HepG2 (cell line): ENCODE measurements at regions of chr17 and their contacts with region 1.

Region 1: GRCh38 chr17:57243171-57243948 is 13.0 kb upstream of the MSI2 start:
- DNase-seq: peak; percentile 70
- ATAC-seq: peak; percentile 94
- H3K4me3 ChIP-seq: no peak overlapping the region
- H3K27ac ChIP-seq: no peak overlapping the region
- H3K4me1 ChIP-seq: peaks cover 10% of the 10 kb centered on the region
- H3K27me3 ChIP-seq: no peaks in the 10 kb centered on the region
- CTCF ChIP-seq: peak; percentile 99
- EP300 ChIP-seq: no peak
- POLR2A ChIP-seq: no peak
- RAD21 ChIP-seq: peak; percentile 98

Region 2: DNA sequence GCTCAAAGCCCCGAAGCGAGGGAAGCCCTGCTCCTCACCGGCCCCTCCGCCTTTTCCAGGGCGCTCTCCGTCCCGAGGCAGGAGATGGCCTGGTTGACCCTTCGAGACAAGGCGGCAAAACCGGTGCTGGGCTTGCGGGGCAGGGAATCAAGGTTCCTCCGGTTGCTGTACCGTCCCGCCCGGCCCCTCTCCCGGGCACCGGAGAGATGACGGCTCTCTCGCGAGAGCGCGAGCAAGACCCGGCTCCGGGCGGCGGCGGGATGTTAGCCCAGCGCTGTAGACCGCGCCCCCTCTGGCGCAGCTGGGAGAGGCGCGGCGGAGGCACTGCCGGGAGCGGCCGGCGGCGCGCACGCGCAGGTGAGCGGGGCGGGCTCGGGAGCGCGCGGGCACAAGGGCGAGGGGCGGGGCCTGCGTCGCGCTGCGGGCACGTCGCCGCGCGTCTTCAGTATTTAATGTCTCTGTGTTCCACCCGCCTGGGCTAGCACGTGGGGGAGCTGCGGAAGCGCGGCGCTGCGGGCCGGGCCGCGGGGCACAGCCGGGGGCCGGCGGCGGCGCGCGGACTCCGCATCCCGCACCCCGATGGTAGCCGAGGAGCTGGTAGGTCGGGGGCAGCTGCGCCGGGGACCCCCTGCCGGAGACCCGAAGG is 158.4 kb before region 1 on chr17 and contains the start of gene AKAP1:
- CTCF ChIA-PET with region 1: no interaction called
- POLR2A ChIA-PET with region 1: no interaction called
- in situ Hi-C with region 1: no loop called
- intact Hi-C with region 1: no loop called
- DNase-seq: peak; percentile 92
- ATAC-seq: peak; percentile 72
- H3K4me3 ChIP-seq: peak within 1 kb of the TSS; percentile 84 to 100 (median 94)
- H3K27ac ChIP-seq: peak within 1 kb of the TSS; percentile 92
- H3K4me1 ChIP-seq: peaks cover 62% of the 10 kb centered on the region
- H3K27me3 ChIP-seq: no peaks in the 10 kb centered on the region; a peak in 1 of 5 replicates
- CTCF ChIP-seq: peak; percentile 80
- EP300 ChIP-seq: peak in 1 of 2 experiments; percentile 35; a peak in 2 of 4 replicates
- POLR2A ChIP-seq: peak; percentile 87 to 95
- RAD21 ChIP-seq: peak; percentile 50; the same call in 1 of the 2 replicates
- total RNA-seq, gene AKAP1: 46.4 and 101 TPM in 2 replicates

Region 3: DNA sequence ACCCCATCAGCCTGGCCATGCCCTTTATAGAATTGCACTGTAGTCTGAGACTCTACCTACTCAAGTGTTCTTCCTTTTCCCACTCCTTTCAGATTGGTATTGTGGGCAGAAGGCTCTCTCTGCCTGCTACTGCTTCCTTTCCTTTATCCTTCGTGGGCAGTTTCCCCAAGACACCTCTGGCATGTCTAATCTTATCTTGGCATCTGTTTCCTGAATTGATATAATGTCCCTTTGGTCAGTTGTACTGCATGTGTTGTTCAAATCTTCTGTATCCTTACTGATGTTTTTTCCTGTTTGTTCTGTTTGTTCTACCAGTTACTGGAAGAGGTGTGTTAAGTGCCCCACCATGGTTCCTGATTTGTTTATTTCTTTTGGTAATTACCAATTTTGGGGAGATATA is 16.6 kb before region 1 on chr17:
- CTCF ChIA-PET with region 1: no interaction called
- POLR2A ChIA-PET with region 1: no interaction called
- in situ Hi-C with region 1: no loop called
- intact Hi-C with region 1: no loop called
- DNase-seq: no peak
- ATAC-seq: no peak
- H3K4me3 ChIP-seq: no peak overlapping the region
- H3K27ac ChIP-seq: no peak overlapping the region
- H3K4me1 ChIP-seq: no peaks in the 10 kb centered on the region
- H3K27me3 ChIP-seq: peaks cover 0 to 6% of the 10 kb centered on the region in 2 experiments; a peak in 3 of 5 replicates
- CTCF ChIP-seq: no peak
- EP300 ChIP-seq: no peak
- POLR2A ChIP-seq: no peak
- RAD21 ChIP-seq: no peak

Region 4: DNA sequence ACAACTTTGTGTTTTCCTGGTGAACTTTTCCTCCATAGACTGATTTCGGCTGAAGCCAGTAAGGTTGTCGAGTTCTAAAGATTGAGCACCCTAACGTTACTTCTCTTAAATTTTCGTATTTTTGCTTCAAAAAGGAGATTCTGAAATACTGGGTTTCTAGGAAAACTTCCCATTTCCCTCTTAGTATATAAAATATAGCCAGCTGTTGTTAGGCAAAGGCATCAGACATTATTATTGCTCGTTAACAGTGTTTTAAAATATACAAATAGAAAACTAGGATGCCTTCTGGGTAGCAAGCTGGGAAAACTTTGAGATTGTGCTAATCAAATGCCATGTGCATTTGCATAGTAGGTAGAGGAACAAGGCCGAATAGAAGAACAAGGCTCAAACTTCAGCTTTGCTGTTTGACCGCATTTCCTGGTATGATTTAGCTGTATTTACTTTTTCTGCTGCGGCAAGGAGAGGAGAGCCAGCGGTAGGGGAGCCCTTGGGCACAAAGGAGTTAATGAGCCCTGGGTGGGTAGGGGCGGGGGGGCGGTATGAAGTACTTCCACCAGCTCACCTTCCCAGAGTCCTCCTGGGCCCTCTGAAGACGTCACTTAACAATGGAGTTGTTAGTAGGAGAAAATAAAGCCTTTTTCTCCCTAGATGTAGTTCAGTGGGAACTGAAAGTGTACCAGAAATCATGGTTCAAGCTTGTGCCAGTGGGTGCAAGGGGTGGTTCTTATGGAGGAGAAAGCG is 164.9 kb after region 1 on chr17:
- CTCF ChIA-PET with region 1: interaction called, 10 read pairs
- POLR2A ChIA-PET with region 1: no interaction called
- in situ Hi-C with region 1: no loop called
- intact Hi-C with region 1: loop called (anchors 5 kb)
- DNase-seq: peak; percentile 86
- ATAC-seq: peak; percentile 27
- H3K4me3 ChIP-seq: peak overlapping the region; percentile 26 to 57 (median 51)
- H3K27ac ChIP-seq: peak overlapping the region; percentile 96
- H3K4me1 ChIP-seq: peaks cover 100% of the 10 kb centered on the region
- H3K27me3 ChIP-seq: no peaks in the 10 kb centered on the region
- CTCF ChIP-seq: no peak
- EP300 ChIP-seq: peak in 1 of 2 experiments; percentile 41; a peak in 1 of 4 replicates
- POLR2A ChIP-seq: peak in 1 of 2 experiments; percentile 39; a peak in 1 of 4 replicates
- RAD21 ChIP-seq: no peak

Region 5: GRCh38 chr17:57463103-57463851 is 219.9 kb after region 1 on chr17:
- CTCF ChIA-PET with region 1: interaction called, 11 read pairs
- POLR2A ChIA-PET with region 1: no interaction called
- in situ Hi-C with region 1: no loop called
- intact Hi-C with region 1: no loop called
- DNase-seq: peak; percentile 30
- ATAC-seq: no peak
- H3K4me3 ChIP-seq: no peak overlapping the region
- H3K27ac ChIP-seq: no peak overlapping the region
- H3K4me1 ChIP-seq: peaks cover 74% of the 10 kb centered on the region
- H3K27me3 ChIP-seq: no peaks in the 10 kb centered on the region
- CTCF ChIP-seq: no peak
- EP300 ChIP-seq: no peak
- POLR2A ChIP-seq: no peak
- RAD21 ChIP-seq: no peak

Region 6: DNA sequence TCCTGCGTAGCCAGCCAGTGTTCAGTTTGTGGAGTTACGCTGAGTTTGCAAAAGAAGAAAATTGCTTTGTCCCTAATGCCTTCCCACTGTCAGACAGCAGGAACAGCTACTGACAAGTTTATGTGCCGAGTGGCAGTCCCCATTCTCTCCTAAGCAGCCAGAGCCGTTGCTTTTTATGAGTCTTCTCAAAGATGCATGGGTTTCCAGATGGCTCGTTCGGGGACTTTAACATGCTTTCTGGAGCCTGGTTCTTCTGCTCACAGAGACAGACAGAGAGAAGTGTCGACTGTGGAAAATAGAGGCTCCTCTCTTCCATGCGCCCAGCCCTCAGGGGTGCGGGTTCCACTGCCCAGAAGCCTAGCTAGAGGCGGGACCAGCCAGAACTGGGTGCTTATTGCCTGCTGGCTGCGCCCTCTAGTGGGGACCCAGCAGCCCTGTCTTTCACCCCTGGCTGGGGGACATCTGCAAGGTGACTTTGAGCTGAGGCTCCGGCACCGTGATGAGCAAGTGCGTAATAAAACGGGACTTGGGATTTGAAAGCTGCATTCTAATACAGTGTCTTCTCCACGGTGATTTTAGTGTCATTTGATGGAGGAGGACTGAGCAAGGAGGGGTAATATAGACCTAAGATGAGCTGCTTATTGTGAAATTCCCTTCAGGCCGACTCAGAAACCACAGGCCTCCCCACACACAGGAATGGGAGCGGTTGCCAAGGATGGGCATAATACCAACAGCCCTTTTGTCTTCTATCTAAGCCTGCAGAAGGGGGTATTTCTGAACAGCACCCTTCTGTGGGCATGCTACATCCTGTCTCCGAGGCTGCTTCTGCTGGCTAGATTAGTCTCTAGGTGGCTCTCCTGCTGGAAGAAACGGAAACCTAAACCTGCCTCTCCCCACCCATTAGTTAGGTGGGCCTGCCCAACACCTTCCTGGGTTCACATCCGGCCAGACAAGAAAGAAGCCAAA is 428.6 kb after region 1 on chr17:
- CTCF ChIA-PET with region 1: interaction called, 17 read pairs
- POLR2A ChIA-PET with region 1: interaction called, 5 read pairs
- in situ Hi-C with region 1: no loop called
- intact Hi-C with region 1: loop called (anchors 1 kb)
- DNase-seq: peak; percentile 69
- ATAC-seq: peak; percentile 97
- H3K4me3 ChIP-seq: no peak overlapping the region
- H3K27ac ChIP-seq: no peak overlapping the region
- H3K4me1 ChIP-seq: no peaks in the 10 kb centered on the region
- H3K27me3 ChIP-seq: no peaks in the 10 kb centered on the region
- CTCF ChIP-seq: peak; percentile 97
- EP300 ChIP-seq: no peak
- POLR2A ChIP-seq: no peak
- RAD21 ChIP-seq: peak; percentile 93

Region 7: GRCh38 chr17:57833179-57833939 is 590.0 kb after region 1 on chr17:
- CTCF ChIA-PET with region 1: interaction called, 11 read pairs
- POLR2A ChIA-PET with region 1: no interaction called
- in situ Hi-C with region 1: no loop called
- intact Hi-C with region 1: loop called (anchors 2 kb)
- DNase-seq: peak; percentile 72
- ATAC-seq: peak; percentile 92
- H3K4me3 ChIP-seq: peak overlapping the region; percentile 54 to 74 (median 68)
- H3K27ac ChIP-seq: peak overlapping the region; percentile 41
- H3K4me1 ChIP-seq: peaks cover 69% of the 10 kb centered on the region
- H3K27me3 ChIP-seq: no peaks in the 10 kb centered on the region; a peak in 1 of 5 replicates
- CTCF ChIP-seq: peak; percentile 96
- EP300 ChIP-seq: peak in 1 of 2 experiments; percentile 53; a peak in 1 of 4 replicates
- POLR2A ChIP-seq: no peak
- RAD21 ChIP-seq: peak; percentile 73